Ascending aorta (tissue), 2 donors: ENCODE measurements at regions of chr9 and their contacts with region 1.

Region 1: DNA sequence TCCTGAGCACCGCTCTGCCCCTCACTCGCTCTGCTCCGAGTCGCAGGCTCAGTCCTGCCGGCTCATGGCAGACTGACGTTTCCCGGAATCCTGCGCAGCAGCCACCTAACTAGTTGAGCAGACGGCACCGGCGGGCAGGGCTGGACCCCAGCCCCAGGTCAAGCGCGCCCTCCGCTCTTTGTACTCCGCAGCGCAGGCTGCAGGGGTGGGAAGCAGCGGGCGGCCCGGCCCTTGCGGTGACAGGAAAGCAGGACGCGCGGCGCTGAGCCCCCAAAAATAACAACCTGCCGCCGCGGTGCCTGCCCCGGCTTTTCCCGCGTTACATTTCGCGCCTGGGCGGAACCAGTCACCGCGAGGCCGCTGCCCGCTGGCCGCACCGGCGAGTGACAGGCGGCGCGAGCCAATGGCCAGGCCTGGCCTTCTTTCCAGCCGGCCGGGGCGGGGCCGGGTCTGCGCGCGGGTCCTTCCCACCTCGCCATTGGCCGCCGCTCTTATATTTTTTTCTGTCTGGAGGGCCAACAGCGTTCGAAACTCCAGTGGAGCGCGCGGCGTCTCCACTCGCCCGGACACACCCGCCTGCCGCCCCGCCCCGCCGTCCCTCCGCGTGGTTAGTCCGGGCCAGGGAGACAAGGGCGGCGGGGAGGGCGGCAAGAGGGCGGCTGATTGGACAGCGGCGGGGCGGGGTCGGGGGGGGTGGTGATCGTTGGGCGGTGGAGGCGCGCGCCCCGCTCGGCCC is at the start of gene ZNF367:
- DNase-seq: peak; percentile 96 to 99
- H3K4me3 ChIP-seq: peak within 1 kb of the TSS; percentile 77 to 92
- H3K27ac ChIP-seq: peak within 1 kb of the TSS; percentile 99
- H3K4me1 ChIP-seq: peaks cover 11 to 23% of the 10 kb centered on the region in 2 donors
- H3K27me3 ChIP-seq: no peaks in the 10 kb centered on the region
- CTCF ChIP-seq: no peak
- total RNA-seq, gene ZNF367: 3.9 TPM

Region 2: GRCh38 chr9:96217754-96218693 is 200.2 kb before region 1 on chr9:
- intact Hi-C with region 1: no loop called
- DNase-seq: peak in 1 of 2 donors; percentile 72
- H3K4me3 ChIP-seq: peak overlapping the region; percentile 40 to 57
- H3K27ac ChIP-seq: peak overlapping the region; percentile 10 to 32
- H3K4me1 ChIP-seq: peaks cover 0 to 16% of the 10 kb centered on the region in 2 donors
- H3K27me3 ChIP-seq: no peaks in the 10 kb centered on the region
- CTCF ChIP-seq: peak; percentile 90 to 98 (median 96)

Region 3: DNA sequence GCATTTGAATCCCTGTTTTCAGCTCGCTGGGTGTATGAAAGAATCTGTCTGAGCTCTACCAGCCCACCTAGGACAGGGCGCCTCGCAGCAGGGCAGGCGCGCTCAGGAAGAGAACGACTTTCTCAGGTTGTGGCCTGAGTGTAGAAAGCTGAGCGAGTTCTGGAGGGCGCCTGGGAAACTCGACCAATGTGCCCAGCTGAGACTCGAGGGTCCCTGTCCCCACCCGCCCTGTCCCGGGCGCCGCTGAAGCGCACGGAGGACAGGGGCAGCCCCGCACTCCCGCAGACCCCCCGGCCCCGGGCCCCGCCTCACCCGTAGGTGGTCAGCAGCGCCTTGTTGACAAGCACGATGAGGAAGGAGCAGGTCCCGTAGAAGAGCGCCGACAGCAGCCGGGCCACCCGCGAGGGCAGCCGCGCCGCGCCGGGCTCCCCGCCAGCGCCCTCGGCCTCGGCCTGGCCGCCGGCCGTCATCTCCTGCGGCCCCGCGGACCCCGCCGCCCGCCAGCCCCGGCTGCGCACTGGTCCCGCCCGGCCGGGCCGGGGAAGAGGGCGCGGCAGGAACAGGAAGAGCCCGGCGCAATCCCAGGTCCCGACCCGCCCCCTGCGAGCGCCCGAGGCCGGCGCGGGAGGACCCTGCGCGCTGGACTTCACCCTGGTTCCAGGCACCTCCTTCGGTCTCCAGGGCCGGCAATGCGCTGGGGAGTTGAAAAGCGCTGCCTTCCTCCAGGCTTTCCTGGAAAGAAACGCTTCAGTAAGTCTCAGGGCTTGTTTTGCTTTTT is 34.9 kb before region 1 on chr9 and contains the start of gene SLC35D2:
- intact Hi-C with region 1: loop called (anchors 2 kb)
- DNase-seq: peak in 1 of 2 donors; percentile 79
- H3K4me3 ChIP-seq: peak within 1 kb of the TSS; percentile 79 to 94
- H3K27ac ChIP-seq: peak within 1 kb of the TSS; percentile 90 to 93
- H3K4me1 ChIP-seq: peaks cover 0 to 13% of the 10 kb centered on the region in 2 donors
- H3K27me3 ChIP-seq: no peaks in the 10 kb centered on the region
- CTCF ChIP-seq: no peak
- total RNA-seq, gene SLC35D2: 11.9 TPM

Region 4: DNA sequence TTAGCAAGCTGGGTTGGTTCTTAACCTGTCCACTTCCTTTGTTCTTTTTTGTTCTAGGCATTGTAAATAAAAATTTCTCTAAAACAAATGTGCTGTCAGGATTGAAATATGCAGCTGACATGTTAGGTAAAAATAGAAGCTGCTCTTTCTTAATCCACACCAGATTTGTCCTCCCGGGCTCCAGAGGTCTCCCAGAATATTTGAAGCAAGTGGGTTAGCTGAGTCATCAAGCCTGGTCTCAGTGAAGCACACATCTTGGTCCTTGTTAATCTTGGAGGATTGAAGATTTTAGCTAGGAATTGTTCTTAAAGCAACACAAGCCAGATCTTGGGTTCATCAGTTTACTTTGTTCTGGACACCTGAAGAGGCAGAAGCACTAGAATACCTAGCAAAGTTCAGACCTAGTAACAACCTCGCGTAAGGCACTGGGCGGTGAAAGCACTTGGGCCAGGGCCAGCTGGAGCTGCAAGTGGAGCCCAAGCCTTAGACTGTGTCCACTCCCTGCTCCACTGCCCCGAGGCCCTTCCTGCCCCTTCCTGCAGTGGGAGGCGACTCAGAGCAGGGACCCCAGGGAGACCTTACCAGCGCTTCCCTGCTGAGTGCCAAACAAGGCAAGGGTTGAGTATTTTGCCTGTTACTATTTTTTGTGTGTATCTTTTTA is 68.3 kb after region 1 on chr9:
- intact Hi-C with region 1: loop called (anchors 2 kb)
- DNase-seq: peak in 1 of 2 donors; percentile 88
- H3K4me3 ChIP-seq: peak overlapping the region in 1 of 2 donors; percentile 12
- H3K27ac ChIP-seq: peak overlapping the region; percentile 92 to 93
- H3K4me1 ChIP-seq: peaks cover 19 to 57% of the 10 kb centered on the region in 2 donors
- H3K27me3 ChIP-seq: no peaks in the 10 kb centered on the region
- CTCF ChIP-seq: no peak

Region 5: DNA sequence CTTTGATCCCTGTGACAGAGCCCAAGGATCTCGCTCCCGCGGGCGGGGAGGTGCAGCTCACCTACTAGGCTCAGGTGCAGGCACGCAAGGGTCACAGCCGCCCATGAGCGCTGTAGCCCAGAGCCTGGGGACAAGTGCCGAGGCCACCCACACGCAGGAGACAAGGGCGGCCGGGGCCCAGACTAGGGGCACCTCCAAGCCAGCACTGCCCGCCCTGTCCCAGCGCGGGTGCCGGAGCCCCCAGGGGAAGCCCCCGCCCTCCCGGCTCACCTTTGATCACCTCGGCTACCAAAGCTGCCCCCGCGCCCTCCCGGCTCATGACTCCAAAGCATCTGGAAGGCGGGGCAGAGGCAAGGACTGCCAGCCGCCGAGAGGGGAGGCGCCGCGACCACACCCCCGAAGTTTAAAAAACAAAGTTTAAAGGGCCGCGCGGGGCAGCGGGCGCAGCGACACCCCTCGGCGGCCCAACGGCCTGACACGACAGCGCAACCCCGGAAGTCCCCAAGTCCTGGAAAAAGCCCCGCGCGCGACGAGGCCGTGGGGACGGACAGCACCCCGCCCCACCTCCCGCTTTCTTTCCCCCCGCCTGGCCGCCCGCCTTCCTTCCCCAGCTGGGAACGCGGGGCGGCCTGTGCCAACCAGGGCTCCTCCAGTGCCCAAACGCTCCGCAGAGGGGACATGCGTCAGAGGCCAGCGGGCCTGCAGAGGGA is 148.4 kb after region 1 on chr9:
- intact Hi-C with region 1: loop called (anchors 2 kb)
- DNase-seq: peak; percentile 24 to 91
- H3K4me3 ChIP-seq: peak overlapping the region; percentile 70 to 88
- H3K27ac ChIP-seq: peak overlapping the region; percentile 86 to 96
- H3K4me1 ChIP-seq: peaks cover 0 to 11% of the 10 kb centered on the region in 2 donors
- H3K27me3 ChIP-seq: no peaks in the 10 kb centered on the region
- CTCF ChIP-seq: peak; percentile 72 to 80 (median 78)

Region 6: GRCh38 chr9:96654443-96655197 is 236.4 kb after region 1 on chr9:
- intact Hi-C with region 1: loop called (anchors 1 kb)
- DNase-seq: peak; percentile 73 to 95
- H3K4me3 ChIP-seq: peak overlapping the region; percentile 64 to 92
- H3K27ac ChIP-seq: peak overlapping the region; percentile 96 to 100
- H3K4me1 ChIP-seq: peaks cover 4 to 7% of the 10 kb centered on the region in 2 donors
- H3K27me3 ChIP-seq: no peaks in the 10 kb centered on the region
- CTCF ChIP-seq: peak in 1 of 3 experiments; percentile 47

Region 7: DNA sequence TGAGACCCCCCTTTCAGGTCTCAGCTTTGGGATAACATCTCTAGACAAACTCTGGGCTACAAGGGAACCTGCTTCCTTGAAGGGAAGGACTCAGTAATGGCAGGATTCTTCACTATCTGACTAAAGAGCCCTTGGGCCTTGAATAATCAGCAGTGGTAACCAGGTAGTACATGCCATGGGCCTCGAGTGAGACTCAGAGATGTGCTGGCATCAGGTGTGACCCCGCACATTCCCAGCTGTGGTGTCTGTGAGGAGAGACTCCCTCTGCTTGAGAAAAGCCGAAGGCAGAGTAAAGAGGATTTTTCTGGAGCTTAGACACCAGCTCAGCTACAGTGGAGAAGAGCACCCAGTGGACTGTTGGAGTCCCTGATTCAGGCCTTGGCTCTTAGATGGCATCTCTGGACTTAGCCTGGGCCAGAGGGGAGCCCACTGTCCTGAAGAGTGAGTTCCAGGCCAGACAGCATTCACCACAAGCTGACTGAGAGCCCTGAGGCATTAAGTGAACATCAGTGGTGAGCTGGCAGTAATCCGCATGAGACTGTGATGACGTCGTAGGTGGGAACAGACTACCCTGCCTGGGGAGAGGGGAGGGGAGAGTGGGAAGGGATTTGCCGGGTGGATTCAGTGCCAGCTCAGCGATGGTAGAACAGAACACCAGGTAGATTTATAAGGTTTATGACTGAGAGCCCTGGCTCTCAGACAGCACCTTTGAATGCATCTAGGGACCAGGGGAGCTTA is 441.4 kb after region 1 on chr9:
- intact Hi-C with region 1: no loop called
- DNase-seq: no peak
- H3K4me3 ChIP-seq: no peak overlapping the region
- H3K27ac ChIP-seq: no peak overlapping the region
- H3K4me1 ChIP-seq: no peaks in the 10 kb centered on the region
- H3K27me3 ChIP-seq: no peaks in the 10 kb centered on the region
- CTCF ChIP-seq: no peak